ENCODE measurements at regions of chr2 and their contacts with region 1.

Region 1: DNA sequence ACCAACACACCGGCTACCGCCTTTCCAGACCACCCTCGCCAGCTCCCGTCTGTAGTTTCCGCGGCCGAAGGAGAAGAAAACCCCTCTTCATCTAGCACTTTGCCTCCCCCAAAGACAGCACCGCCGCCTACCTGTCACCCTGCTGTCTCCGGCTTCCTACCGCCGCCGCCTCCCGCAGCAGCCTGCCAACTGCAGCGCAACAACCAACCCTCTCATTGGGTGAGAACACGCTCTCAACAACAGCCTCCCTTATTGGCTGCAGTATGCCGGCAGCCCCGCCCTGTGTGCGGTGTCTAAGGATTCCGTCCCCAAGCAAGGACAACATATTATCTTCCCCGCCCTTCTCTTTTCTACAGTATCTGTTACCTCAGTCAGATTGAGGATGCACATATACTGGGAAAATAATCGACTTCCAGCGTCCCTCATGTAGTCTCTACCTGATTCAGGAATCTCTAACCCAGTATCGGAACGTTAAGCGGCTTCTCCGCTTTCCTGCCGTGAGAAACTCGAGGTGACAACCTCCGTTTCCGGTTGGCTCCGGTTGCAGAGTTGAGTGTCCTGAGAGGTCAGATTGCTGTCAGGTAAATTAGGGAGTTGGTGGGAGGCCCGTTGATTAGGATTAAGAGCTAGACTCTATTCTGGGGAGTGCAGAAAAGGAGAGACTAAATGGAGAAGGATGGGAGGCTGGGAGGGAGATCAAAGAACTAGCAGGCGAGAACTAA is at the starts of genes HYCC2 and NDUFB3:
- DNase-seq: peak; percentile 98
- ATAC-seq: peak; percentile 97
- H3K4me3 ChIP-seq: peak within 1 kb of the TSS; percentile 61 to 92 (median 86)
- H3K4me3 Mint-ChIP-seq: peak within 1 kb of the TSS; percentile 91
- H3K27ac ChIP-seq: peak within 1 kb of the TSS; percentile 58 to 91
- H3K27ac Mint-ChIP-seq: peak within 1 kb of the TSS; percentile 98
- H3K4me1 ChIP-seq: peaks cover 18 to 27% of the 10 kb centered on the region in 2 donors
- H3K4me1 Mint-ChIP-seq: peaks cover 39% of the 10 kb centered on the region
- H3K27me3 ChIP-seq: no peaks in the 10 kb centered on the region
- H3K27me3 Mint-ChIP-seq: no peaks in the 10 kb centered on the region
- CTCF ChIP-seq: peak; percentile 40
- total RNA-seq, gene HYCC2: 30.1 and 32.4 TPM in 2 replicates
- total RNA-seq, gene NDUFB3: 35.1 and 44.7 TPM in 2 replicates

Region 2: GRCh38 chr2:200578778-200579177 is 492.9 kb before region 1 on chr2:
- CTCF ChIA-PET with region 1: interaction called, 3 read pairs
- POLR2A ChIA-PET with region 1: no interaction called
- intact Hi-C with region 1: loop called (anchors 2 kb)
- DNase-seq: peak; percentile 38
- ATAC-seq: peak; percentile 31
- H3K4me3 ChIP-seq: no peak overlapping the region
- H3K4me3 Mint-ChIP-seq: no peak overlapping the region
- H3K27ac ChIP-seq: no peak overlapping the region
- H3K27ac Mint-ChIP-seq: no peak overlapping the region
- H3K4me1 ChIP-seq: no peaks in the 10 kb centered on the region
- H3K4me1 Mint-ChIP-seq: no peaks in the 10 kb centered on the region
- H3K27me3 ChIP-seq: peaks cover 0 to 5% (median 0%) of the 10 kb centered on the region in 4 experiments
- H3K27me3 Mint-ChIP-seq: no peaks in the 10 kb centered on the region
- CTCF ChIP-seq: peak; percentile 46

Region 3: DNA sequence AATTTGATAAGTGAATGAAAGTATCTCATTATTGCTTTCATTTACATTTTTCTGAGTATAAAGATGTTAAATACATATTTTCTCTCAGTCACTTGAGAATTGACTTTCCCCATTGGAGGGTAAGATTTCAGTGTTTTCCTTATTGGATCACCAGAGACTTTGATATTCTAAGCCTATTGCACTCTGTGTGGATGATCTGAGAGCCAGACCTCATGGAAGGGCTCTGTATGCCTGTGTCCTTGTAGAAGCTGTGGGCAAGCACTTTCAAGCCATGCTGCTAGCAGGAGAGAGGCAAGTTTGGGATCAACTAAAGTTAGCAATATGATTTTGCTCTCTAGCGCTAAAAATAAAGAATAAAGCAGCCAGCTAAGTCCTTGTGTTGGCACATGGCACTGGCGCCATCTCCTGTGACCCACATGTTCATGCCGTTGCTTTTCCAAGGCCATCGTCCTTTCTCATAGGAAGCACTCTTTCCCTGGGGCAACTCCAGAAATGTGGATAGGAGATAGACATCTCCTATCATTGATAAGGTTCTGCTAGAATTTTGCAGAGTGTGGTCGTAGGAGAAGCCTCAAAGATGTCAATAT is 413.3 kb before region 1 on chr2:
- CTCF ChIA-PET with region 1: no interaction called
- POLR2A ChIA-PET with region 1: no interaction called
- intact Hi-C with region 1: no loop called
- DNase-seq: no peak
- ATAC-seq: no peak
- H3K4me3 ChIP-seq: no peak overlapping the region
- H3K4me3 Mint-ChIP-seq: no peak overlapping the region
- H3K27ac ChIP-seq: no peak overlapping the region
- H3K27ac Mint-ChIP-seq: no peak overlapping the region
- H3K4me1 ChIP-seq: no peaks in the 10 kb centered on the region
- H3K4me1 Mint-ChIP-seq: no peaks in the 10 kb centered on the region
- H3K27me3 ChIP-seq: no peaks in the 10 kb centered on the region
- H3K27me3 Mint-ChIP-seq: peaks cover 11% of the 10 kb centered on the region
- CTCF ChIP-seq: no peak

Region 4: DNA sequence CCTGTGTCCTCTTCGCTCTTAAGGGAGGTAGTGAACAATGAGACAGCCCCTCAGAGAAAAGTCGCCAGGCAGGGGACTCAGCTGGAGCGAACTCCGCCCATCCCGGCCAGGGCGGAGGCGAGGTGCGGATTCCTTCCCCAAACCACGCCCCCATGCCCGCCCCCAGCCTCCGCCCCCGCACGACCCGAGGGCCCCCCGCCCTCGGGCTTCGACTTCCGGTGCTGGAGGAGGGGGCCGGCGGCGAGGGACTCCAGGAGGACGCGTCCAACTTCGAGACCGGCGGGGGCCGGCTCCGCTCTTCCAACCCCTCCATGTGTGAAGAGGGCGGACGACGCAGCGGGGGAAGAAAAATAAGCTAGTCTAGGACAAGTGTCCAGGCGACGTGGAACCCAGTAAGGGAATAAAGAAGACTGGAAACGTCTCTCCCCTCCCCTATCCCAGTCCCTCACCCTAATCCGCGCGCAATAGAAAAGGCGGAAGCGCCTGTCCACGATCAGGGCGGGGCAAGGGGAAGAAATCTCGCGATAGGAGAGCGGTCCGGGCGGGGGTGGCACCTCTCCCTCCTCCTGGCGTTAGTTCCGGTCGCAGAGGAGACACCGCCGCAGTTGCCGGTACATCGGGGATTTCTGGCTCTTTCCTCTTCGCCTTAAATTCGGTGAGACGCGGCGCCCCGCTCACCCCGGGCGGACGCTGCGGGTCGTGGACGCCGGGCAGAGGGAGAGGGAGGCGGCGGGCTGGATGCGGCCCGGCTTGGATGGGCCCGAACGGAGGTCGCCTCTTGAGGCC is 260.1 kb before region 1 on chr2 and contains the start of gene BZW1:
- CTCF ChIA-PET with region 1: no interaction called
- POLR2A ChIA-PET with region 1: no interaction called
- intact Hi-C with region 1: loop called (anchors 2 kb)
- DNase-seq: peak; percentile 99
- ATAC-seq: peak; percentile 80
- H3K4me3 ChIP-seq: peak within 1 kb of the TSS; percentile 75 to 93 (median 92)
- H3K4me3 Mint-ChIP-seq: peak within 1 kb of the TSS; percentile 94
- H3K27ac ChIP-seq: peak within 1 kb of the TSS; percentile 99
- H3K27ac Mint-ChIP-seq: peak within 1 kb of the TSS; percentile 99
- H3K4me1 ChIP-seq: peaks cover 19 to 24% of the 10 kb centered on the region in 2 donors
- H3K4me1 Mint-ChIP-seq: peaks cover 39% of the 10 kb centered on the region
- H3K27me3 ChIP-seq: no peaks in the 10 kb centered on the region
- H3K27me3 Mint-ChIP-seq: no peaks in the 10 kb centered on the region
- CTCF ChIP-seq: no peak
- total RNA-seq, gene BZW1: 109 and 120 TPM in 2 replicates

Region 5: GRCh38 chr2:200901459-200902072 is 170.1 kb before region 1 on chr2:
- CTCF ChIA-PET with region 1: interaction called, 97 read pairs
- POLR2A ChIA-PET with region 1: no interaction called
- intact Hi-C with region 1: loop called (anchors 1 kb)
- DNase-seq: peak; percentile 86
- ATAC-seq: peak; percentile 100
- H3K4me3 ChIP-seq: no peak overlapping the region
- H3K4me3 Mint-ChIP-seq: no peak overlapping the region
- H3K27ac ChIP-seq: peak overlapping the region in 1 of 2 donors; percentile 40
- H3K27ac Mint-ChIP-seq: no peak overlapping the region
- H3K4me1 ChIP-seq: no peaks in the 10 kb centered on the region
- H3K4me1 Mint-ChIP-seq: peaks cover 4% of the 10 kb centered on the region
- H3K27me3 ChIP-seq: no peaks in the 10 kb centered on the region
- H3K27me3 Mint-ChIP-seq: no peaks in the 10 kb centered on the region
- CTCF ChIP-seq: peak; percentile 94

Region 6: GRCh38 chr2:201049455-201049854 is 22.2 kb before region 1 on chr2:
- CTCF ChIA-PET with region 1: interaction called, 10 read pairs
- POLR2A ChIA-PET with region 1: no interaction called
- intact Hi-C with region 1: no loop called
- DNase-seq: no peak
- ATAC-seq: no peak
- H3K4me3 ChIP-seq: no peak overlapping the region
- H3K4me3 Mint-ChIP-seq: no peak overlapping the region
- H3K27ac ChIP-seq: no peak overlapping the region
- H3K27ac Mint-ChIP-seq: no peak overlapping the region
- H3K4me1 ChIP-seq: no peaks in the 10 kb centered on the region
- H3K4me1 Mint-ChIP-seq: peaks cover 2% of the 10 kb centered on the region
- H3K27me3 ChIP-seq: no peaks in the 10 kb centered on the region
- H3K27me3 Mint-ChIP-seq: no peaks in the 10 kb centered on the region
- CTCF ChIP-seq: no peak

Region 7: GRCh38 chr2:201158111-201158929 is 86.7 kb after region 1 on chr2:
- CTCF ChIA-PET with region 1: interaction called, 45 read pairs
- POLR2A ChIA-PET with region 1: no interaction called
- intact Hi-C with region 1: loop called (anchors 1 kb)
- DNase-seq: peak; percentile 95
- ATAC-seq: peak; percentile 91
- H3K4me3 ChIP-seq: peak overlapping the region in 1 of 5 experiments; percentile 9
- H3K4me3 Mint-ChIP-seq: peak overlapping the region; percentile 64
- H3K27ac ChIP-seq: peak overlapping the region; percentile 84 to 85
- H3K27ac Mint-ChIP-seq: peak overlapping the region; percentile 90
- H3K4me1 ChIP-seq: peaks cover 43 to 47% of the 10 kb centered on the region in 2 donors
- H3K4me1 Mint-ChIP-seq: peaks cover 52% of the 10 kb centered on the region
- H3K27me3 ChIP-seq: no peaks in the 10 kb centered on the region
- H3K27me3 Mint-ChIP-seq: no peaks in the 10 kb centered on the region
- CTCF ChIP-seq: peak; percentile 69

Region 8: DNA sequence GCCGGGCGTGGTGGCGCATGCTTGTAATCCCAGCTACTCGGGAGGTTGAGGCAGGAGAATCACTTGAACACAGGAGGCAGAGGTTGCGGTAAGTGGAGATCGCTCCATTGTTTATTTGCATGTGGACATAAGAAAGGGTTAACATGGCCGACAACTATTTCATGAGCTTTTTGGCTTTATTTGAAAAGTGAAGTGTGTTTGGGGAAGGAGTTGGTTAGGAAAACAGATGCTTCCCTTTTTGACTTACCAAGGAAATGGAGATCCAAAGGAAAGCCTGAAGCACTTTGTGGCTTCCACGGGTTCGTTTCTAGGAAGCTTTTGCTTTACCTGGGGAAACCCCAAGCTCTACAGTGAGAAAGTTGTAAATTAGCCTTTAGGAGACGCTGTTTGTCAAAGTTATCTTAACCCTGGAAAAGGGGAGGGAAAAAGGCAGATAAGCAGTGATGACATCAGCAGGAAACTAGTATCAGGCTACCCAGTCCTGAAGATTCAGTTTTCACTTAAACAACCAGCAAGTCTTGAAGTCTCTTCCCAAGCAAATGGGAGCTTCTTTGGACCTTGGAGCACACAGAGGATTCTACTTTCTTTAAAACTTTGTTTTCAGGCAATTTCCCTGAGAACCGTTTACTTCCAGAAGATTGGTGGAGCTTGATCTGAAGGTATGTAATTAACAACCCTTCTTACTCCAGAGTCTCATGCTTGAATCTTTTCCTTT is 111.2 kb after region 1 on chr2 and contains the start of gene CASP10:
- CTCF ChIA-PET with region 1: interaction called, 46 read pairs
- POLR2A ChIA-PET with region 1: interaction called, 3 read pairs
- intact Hi-C with region 1: no loop called
- DNase-seq: peak; percentile 85
- ATAC-seq: peak; percentile 84
- H3K4me3 ChIP-seq: peak within 1 kb of the TSS; percentile 64 to 96 (median 79)
- H3K4me3 Mint-ChIP-seq: peak within 1 kb of the TSS; percentile 96
- H3K27ac ChIP-seq: peak within 1 kb of the TSS; percentile 33 to 71
- H3K27ac Mint-ChIP-seq: peak within 1 kb of the TSS; percentile 86
- H3K4me1 ChIP-seq: peaks cover 30 to 37% of the 10 kb centered on the region in 2 donors
- H3K4me1 Mint-ChIP-seq: peaks cover 46% of the 10 kb centered on the region
- H3K27me3 ChIP-seq: no peaks in the 10 kb centered on the region
- H3K27me3 Mint-ChIP-seq: no peaks in the 10 kb centered on the region
- CTCF ChIP-seq: peak; percentile 71
- total RNA-seq, gene CASP10: 33.7 and 34.3 TPM in 2 replicates

Measured in B cell (primary cell).